AG04449 (cell line): ENCODE measurements at regions of chr10 and their contacts with region 1.

Region 1: DNA sequence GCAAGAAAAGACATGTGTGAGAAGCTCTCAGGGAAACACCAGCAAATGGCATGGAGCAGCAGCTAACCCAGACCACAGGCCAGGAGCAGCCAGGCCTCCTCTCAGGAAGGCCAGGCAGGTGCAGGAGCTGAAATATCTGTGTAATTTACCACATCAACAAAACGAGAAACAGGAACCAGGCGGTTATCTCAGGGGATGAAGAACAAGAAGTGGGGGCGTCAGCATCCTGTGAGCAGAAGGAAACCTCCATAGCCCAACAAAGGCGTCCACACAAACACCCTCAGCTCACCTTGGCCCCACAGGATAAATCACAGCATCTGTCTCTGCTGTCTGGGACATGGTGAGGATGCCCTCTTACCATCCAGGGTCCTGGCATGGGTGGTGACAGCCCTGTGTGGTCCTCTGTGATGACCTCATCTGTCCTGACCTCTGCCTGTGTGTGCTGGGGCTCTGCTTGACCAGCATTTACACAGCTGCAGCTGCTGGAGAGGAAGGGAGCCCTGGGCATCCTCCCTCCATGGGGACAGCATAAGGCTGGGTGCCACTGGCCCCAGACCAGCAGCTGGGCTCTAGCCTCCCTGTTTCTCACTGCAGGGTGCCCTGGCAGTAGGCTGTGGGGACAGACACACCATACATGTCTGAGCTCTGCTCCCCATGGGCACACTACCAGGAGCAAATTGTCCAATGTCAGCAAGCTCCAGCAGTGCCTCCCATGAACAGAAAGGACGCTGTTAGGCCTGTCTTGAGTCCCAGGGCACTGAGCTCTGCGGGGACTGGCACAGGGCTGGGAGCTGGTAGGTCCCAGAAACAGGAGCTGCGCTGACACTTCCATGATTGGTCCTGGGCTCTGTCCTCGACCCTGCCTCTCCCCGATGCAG is 34.6 kb downstream of the ANXA8 start:
- DNase-seq: no peak
- H3K4me3 ChIP-seq: no peak overlapping the region
- CTCF ChIP-seq: no peak

Region 2: DNA sequence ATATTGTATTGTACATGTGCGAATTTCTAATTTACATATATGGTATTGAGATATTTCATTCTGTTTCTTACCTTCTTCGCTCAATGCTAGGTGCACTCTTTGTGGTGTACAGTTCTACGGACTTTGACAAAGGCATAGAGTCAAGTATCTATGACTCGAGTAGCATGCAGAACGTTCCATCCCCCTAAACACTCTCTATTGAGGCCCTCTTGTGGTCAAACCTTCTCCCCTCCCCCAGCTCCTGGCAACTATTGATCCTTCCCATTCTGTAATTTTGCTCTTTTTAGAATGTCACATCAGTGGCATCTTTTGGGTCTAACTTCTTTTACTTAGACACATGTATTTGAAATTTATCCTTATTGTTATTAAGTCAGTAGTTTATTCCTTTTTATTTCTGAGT is 180.0 kb before region 1 on chr10:
- CTCF ChIA-PET with region 1: no interaction called
- POLR2A ChIA-PET with region 1: no interaction called
- DNase-seq: no peak
- H3K4me3 ChIP-seq: no peak overlapping the region
- CTCF ChIP-seq: no peak

Region 3: GRCh38 chr10:47311932-47312662 is 137.2 kb before region 1 on chr10:
- CTCF ChIA-PET with region 1: no interaction called
- POLR2A ChIA-PET with region 1: no interaction called
- DNase-seq: peak; percentile 12
- H3K4me3 ChIP-seq: no peak overlapping the region
- CTCF ChIP-seq: peak; percentile 98

Region 4: GRCh38 chr10:47438857-47439474 is 10.4 kb before region 1 on chr10:
- CTCF ChIA-PET with region 1: interaction called, 13 read pairs
- POLR2A ChIA-PET with region 1: no interaction called
- DNase-seq: peak; percentile 23
- H3K4me3 ChIP-seq: no peak overlapping the region
- CTCF ChIP-seq: peak; percentile 63